GM18951 (cell line): ENCODE measurements at regions of chr1 and their contacts with region 1.

Region 1: DNA sequence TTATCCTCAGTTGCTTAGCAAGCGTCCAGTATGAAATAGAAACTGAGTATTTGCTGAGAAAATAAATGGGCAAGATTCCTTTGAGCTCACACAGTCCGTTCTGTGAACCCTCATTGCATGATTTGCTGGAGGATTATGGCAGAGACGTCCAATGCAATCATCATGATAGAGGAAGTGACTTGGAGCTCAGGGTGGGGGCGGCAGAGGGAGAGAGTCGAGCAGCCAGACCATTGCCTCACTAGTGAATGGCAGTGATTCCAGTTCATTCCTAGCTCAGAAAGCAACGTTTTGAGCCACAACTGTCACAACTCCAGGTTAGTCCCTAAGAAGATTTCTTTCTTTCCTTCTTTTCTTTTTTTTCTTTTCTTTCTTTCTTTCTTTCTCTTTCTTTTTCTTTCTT is 27.5 kb upstream of the COL9A2 start:
- POLR2A ChIP-seq: no peak

Region 2: GRCh38 chr1:39940252-39940651 is 404.3 kb before region 1 on chr1:
- in situ Hi-C with region 1: no loop called
- POLR2A ChIP-seq: no peak

Region 3: GRCh38 chr1:40257313-40257687 is 87.3 kb before region 1 on chr1:
- in situ Hi-C with region 1: no loop called
- POLR2A ChIP-seq: no peak

Region 4: GRCh38 chr1:40299366-40300248 is 45.0 kb before region 1 on chr1:
- in situ Hi-C with region 1: no loop called
- POLR2A ChIP-seq: no peak

Region 5: GRCh38 chr1:40404670-40405462 is 60.3 kb after region 1 on chr1:
- in situ Hi-C with region 1: loop called (anchors 5 kb)
- POLR2A ChIP-seq: no peak